ENCODE measurements at regions of chr6 and their contacts with region 1.

Region 1: GRCh38 chr6:13395272-13396237 is 67.2 kb upstream of the TBC1D7 start:
- DNase-seq: peak; percentile 32
- H3K4me3 ChIP-seq: peak overlapping the region; percentile 46
- H3K27ac ChIP-seq: no peak overlapping the region
- H3K4me1 ChIP-seq: peaks cover 73% of the 10 kb centered on the region
- CTCF ChIP-seq: no peak

Region 2: GRCh38 chr6:13302751-13303667 is 92.5 kb before region 1 on chr6:
- CTCF ChIA-PET with region 1: no interaction called
- POLR2A ChIA-PET with region 1: interaction called, 11 read pairs
- intact Hi-C with region 1: no loop called
- DNase-seq: peak; percentile 33
- H3K4me3 ChIP-seq: peak overlapping the region; percentile 14
- H3K27ac ChIP-seq: peak overlapping the region; percentile 65
- H3K4me1 ChIP-seq: peaks cover 75% of the 10 kb centered on the region
- CTCF ChIP-seq: no peak

Region 3: GRCh38 chr6:13355043-13355951 is 40.3 kb before region 1 on chr6:
- CTCF ChIA-PET with region 1: interaction called, 3 read pairs
- POLR2A ChIA-PET with region 1: interaction called, 7 read pairs
- intact Hi-C with region 1: loop called (anchors 1 kb)
- DNase-seq: peak; percentile 45
- H3K4me3 ChIP-seq: peak overlapping the region; percentile 54
- H3K27ac ChIP-seq: peak overlapping the region; percentile 89
- H3K4me1 ChIP-seq: peaks cover 58% of the 10 kb centered on the region
- CTCF ChIP-seq: no peak

Region 4: DNA sequence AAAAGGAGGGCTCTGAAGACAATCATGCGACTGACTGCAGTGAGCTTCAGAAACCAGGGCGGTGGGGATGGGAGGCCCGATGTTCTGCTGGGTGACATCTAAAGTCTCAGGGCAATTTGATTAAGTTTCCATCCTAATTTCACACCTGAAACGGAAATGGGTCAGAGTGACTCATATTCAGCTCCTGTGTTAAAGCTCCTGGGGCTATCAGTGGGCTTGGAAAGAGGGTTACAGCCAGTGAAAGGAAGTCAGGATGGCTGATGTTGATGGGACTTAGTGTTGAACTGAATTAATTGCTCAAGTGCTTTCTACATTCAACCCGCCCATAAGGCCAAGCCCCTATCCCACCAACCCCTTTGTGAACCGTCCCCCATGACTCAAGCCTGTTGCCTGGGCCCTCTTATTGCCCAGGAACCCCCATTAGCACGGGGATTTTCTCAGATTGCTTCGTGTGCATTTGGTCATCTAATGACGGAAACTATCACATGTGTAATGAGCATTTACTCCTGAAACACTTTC is 20.1 kb before region 1 on chr6:
- CTCF ChIA-PET with region 1: interaction called, 4 read pairs
- POLR2A ChIA-PET with region 1: interaction called, 12 read pairs
- intact Hi-C with region 1: no loop called
- DNase-seq: peak; percentile 72
- H3K4me3 ChIP-seq: peak overlapping the region; percentile 13
- H3K27ac ChIP-seq: peak overlapping the region; percentile 30
- H3K4me1 ChIP-seq: peaks cover 59% of the 10 kb centered on the region
- CTCF ChIP-seq: no peak

Region 5: GRCh38 chr6:13427801-13428582 is 32.4 kb after region 1 on chr6:
- CTCF ChIA-PET with region 1: interaction called, 4 read pairs
- POLR2A ChIA-PET with region 1: interaction called, 8 read pairs
- intact Hi-C with region 1: loop called (anchors 2 kb)
- DNase-seq: peak; percentile 72
- H3K4me3 ChIP-seq: peak overlapping the region; percentile 6
- H3K27ac ChIP-seq: peak overlapping the region; percentile 15
- H3K4me1 ChIP-seq: peaks cover 61% of the 10 kb centered on the region
- CTCF ChIP-seq: peak; percentile 62